Right ventricle myocardium superior (tissue), 1 donor: ENCODE measurements at regions of chr16 and their contacts with region 1.

Region 1: GRCh38 chr16:81403616-81404373 is 40.8 kb upstream of the CMIP start:
- DNase-seq: peak; percentile 91
- ATAC-seq: peak; percentile 98

Region 2: GRCh38 chr16:81497690-81498089 is 93.9 kb after region 1 on chr16:
- intact Hi-C with region 1: no loop called
- DNase-seq: peak; percentile 63
- ATAC-seq: peak; percentile 30

Region 3: GRCh38 chr16:81616321-81617055 is 212.7 kb after region 1 on chr16:
- intact Hi-C with region 1: loop called (anchors 10 kb)
- DNase-seq: peak; percentile 82
- ATAC-seq: peak; percentile 66

Region 4: DNA sequence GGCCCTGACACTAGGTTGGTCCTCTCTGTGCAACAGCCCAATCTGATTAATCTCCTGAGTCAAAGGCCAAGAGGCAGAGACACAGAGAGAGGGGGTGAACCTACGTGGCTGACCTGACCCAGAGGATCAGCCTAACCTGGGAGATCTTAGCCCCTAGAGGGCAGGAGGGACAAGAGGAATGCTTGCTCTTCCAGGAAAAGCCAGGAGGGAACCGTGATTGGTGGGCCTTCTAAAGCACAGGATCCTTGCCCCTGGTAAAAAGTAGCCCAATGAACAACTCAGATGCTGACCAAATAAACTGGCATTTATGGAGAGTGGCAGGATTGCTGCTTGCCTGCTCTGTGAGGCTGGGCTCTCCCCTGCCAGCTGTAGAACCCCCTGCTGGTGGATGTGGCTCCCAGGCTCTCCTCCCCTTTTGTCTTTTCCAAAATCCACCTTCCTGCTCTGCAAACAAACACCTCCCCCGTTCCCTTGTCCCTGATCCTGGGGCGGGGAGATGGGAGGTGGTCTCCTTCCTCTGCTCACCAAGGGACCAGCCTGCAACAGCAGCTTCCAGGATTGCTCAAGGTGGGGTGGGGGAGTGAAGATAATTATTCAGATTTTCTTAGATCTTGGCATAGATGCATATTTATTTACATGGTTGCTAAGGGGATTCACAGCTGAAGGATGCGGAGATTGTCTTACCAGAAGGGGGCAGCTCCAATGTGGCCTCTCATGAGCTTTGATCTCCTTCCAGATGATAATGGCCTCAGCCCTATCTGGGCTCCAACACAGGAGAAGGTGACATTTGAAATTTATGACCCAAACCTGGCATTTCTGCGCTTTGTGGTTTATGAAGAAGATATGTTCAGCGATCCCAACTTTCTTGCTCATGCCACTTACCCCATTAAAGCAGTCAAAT is 535.6 kb after region 1 on chr16:
- intact Hi-C with region 1: no loop called
- DNase-seq: no peak
- ATAC-seq: no peak